Sigmoid colon (tissue), 7 donors: ENCODE measurements at regions of chr6 and their contacts with region 1.

Region 1: DNA sequence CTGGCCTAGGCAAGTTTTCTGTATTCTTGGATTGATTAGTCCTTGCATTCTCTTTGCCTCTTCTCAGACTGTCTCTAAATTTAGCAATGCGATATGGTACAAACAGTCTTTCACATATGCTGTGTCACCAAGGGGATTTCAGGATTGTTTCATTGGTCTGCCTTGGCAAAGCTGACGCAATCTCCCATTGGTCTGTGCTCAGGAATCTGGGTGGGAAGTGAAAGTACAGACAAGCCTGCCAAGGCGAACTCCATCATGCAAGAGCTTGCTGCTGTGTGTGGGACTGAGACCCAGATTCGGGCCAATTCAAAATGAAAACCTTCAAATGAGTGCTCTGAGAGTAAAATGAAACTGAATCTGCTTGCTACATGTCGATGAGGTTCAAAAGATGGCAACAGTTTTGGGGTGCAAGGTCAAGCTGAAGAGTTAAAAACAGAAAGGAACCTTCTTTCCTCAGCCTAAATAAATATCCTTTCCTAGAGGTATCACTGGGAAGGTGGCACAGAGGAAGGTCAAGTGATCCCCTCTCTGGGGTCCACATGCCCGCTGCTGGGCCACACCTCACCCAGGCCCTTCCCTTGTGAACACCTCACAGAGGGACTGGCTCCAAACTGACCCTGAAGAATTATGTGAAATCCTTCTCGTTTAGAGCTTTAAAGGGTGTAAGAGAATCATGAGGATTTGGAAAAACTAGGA is 198.8 kb upstream of the PREP start:
- DNase-seq: peak; percentile 89
- H3K4me3 ChIP-seq: no peak overlapping the region
- H3K27ac ChIP-seq: peak overlapping the region; percentile 56 to 76 (median 66)
- H3K4me1 ChIP-seq: peaks cover 0 to 47% (median 36%) of the 10 kb centered on the region in 4 donors
- H3K27me3 ChIP-seq: no peaks in the 10 kb centered on the region
- CTCF ChIP-seq: no peak
- EP300 ChIP-seq: peak in 1 of 4 donors; percentile 37
- POLR2A ChIP-seq: no peak

Region 2: GRCh38 chr6:105644073-105644489 is 42.4 kb after region 1 on chr6:
- intact Hi-C with region 1: loop called (anchors 2 kb)
- DNase-seq: no peak
- H3K4me3 ChIP-seq: no peak overlapping the region
- H3K27ac ChIP-seq: peak overlapping the region in 3 of 4 donors; percentile 46 to 74 (median 66)
- H3K4me1 ChIP-seq: peaks cover 0 to 25% (median 19%) of the 10 kb centered on the region in 4 donors
- H3K27me3 ChIP-seq: no peaks in the 10 kb centered on the region
- CTCF ChIP-seq: no peak
- EP300 ChIP-seq: no peak
- POLR2A ChIP-seq: no peak

Region 3: GRCh38 chr6:105705608-105706007 is 103.9 kb after region 1 on chr6:
- intact Hi-C with region 1: no loop called
- DNase-seq: no peak
- H3K4me3 ChIP-seq: no peak overlapping the region
- H3K27ac ChIP-seq: no peak overlapping the region
- H3K4me1 ChIP-seq: no peaks in the 10 kb centered on the region
- H3K27me3 ChIP-seq: no peaks in the 10 kb centered on the region
- CTCF ChIP-seq: no peak
- EP300 ChIP-seq: no peak
- POLR2A ChIP-seq: no peak

Region 4: GRCh38 chr6:105757512-105758200 is 156.0 kb after region 1 on chr6:
- intact Hi-C with region 1: no loop called
- DNase-seq: no peak
- H3K4me3 ChIP-seq: no peak overlapping the region
- H3K27ac ChIP-seq: no peak overlapping the region
- H3K4me1 ChIP-seq: no peaks in the 10 kb centered on the region
- H3K27me3 ChIP-seq: no peaks in the 10 kb centered on the region
- CTCF ChIP-seq: no peak
- EP300 ChIP-seq: no peak
- POLR2A ChIP-seq: no peak